Pancreas (tissue), 10 donors: ENCODE measurements at regions of chr3 and their contacts with region 1.

Region 1: GRCh38 chr3:169676925-169677537 is 13.5 kb upstream of the MECOM start:
- DNase-seq: no peak
- ATAC-seq: no peak
- H3K4me3 ChIP-seq: no peak overlapping the region
- H3K27ac ChIP-seq: no peak overlapping the region
- H3K4me1 ChIP-seq: no peaks in the 10 kb centered on the region
- H3K27me3 ChIP-seq: no peaks in the 10 kb centered on the region
- CTCF ChIP-seq: no peak

Region 2: DNA sequence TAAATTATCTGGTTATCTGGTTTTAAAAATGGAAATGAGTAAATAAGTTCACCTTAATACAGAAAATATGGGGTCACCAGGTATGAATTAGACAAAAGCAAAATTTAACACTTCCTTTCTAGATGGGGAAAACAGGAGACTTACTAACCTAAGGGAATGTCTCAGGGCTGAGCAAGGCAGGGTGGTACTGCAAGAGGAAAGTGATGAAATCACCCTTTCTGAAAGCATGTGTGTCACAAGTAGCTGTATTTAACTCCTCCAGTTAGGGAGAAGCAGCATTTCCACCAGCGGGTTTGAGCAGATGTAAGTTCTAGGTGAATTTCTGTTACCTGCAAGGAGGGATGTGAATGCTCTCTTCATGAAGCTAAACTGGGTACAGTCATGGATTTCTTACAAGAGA is 642.6 kb before region 1 on chr3:
- intact Hi-C with region 1: loop called in 1 of 3 experiments (anchors 10 kb)
- DNase-seq: no peak
- ATAC-seq: no peak
- H3K4me3 ChIP-seq: no peak overlapping the region
- H3K27ac ChIP-seq: no peak overlapping the region
- H3K4me1 ChIP-seq: no peaks in the 10 kb centered on the region
- H3K27me3 ChIP-seq: no peaks in the 10 kb centered on the region
- CTCF ChIP-seq: no peak

Region 3: GRCh38 chr3:169804681-169805080 is 127.7 kb after region 1 on chr3:
- intact Hi-C with region 1: no loop called
- DNase-seq: no peak
- ATAC-seq: no peak
- H3K4me3 ChIP-seq: no peak overlapping the region
- H3K27ac ChIP-seq: no peak overlapping the region
- H3K4me1 ChIP-seq: peaks cover 0 to 4% (median 0%) of the 10 kb centered on the region in 3 donors
- H3K27me3 ChIP-seq: no peaks in the 10 kb centered on the region
- CTCF ChIP-seq: no peak